ENCODE measurements at regions of chr9 and their contacts with region 1.

Region 1: DNA sequence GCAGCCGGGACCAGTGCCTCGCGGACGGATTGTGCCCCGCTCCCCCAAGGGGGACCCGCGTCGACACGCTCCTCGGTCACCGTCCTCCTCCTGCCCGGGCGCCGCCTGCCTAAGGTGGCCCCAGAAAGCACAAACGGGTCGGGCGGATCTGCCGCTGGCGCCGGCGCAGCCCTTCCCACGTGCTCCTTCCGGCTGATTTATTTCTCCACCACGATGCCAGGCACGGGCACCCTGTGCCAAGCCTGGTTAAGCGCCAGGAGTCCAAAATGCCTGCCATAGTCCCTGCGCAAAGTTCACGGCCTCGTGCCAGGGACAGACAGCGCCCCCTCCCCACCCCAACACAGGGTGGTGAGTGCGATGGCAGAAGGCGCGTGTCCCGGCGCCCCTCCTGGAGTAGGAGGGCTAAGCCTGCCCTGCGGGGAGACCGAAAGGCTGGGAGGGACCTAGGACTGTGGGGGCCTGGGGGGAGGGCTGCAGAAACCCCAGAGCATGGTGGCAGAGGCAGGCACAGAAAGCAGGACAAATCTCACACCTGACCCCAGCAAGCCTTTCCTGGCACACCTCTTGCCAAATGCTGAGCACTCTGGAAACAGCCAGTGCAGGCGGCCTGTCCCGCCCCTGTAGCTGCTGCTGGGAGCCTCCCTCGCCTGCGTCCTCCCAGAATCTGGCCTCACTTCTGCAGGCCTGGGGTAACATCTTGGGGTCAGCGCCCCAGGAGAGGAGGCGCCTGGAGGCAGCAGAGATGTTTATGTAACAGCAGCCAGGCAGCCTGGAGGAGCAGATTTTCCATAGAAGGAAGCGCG is 1.1 kb upstream of the NOTCH1 start:
- DNase-seq: peak; percentile 40 to 81 (median 53)
- ATAC-seq: peak; percentile 41
- H3K4me3 Mint-ChIP-seq: peak overlapping the region; percentile 72 to 90 (median 82)
- H3K27ac Mint-ChIP-seq: peak overlapping the region in 7 of 10 donors; percentile 15 to 83 (median 53)
- H3K4me1 Mint-ChIP-seq: peaks cover 6 to 45% (median 35%) of the 10 kb centered on the region in 4 donors
- H3K27me3 Mint-ChIP-seq: no peaks in the 10 kb centered on the region

Region 2: DNA sequence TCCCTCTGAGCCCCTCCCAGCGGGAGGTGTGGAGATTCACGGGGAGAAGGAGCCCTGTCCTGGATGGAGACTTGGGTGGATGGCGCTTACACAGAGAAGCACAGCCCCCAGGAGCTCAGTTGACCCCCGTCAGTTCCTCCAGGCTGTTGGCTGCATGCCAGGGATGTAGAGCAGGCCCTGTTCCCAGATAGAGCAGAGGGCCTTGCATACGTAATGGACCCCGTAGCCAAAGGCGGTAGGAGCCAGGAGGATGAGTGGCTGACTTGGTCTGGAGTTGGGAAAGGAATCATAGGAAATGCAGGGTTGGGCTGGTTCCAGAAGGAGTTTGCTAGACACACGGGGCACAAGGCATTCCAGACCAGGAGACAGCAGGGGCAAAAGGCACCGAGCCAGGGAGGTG is 133.9 kb before region 1 on chr9:
- POLR2A ChIA-PET with region 1: no interaction called
- DNase-seq: no peak
- ATAC-seq: no peak
- H3K4me3 Mint-ChIP-seq: peak overlapping the region in 2 of 10 donors; percentile 4 to 20
- H3K27ac Mint-ChIP-seq: peak overlapping the region in 1 of 10 donors; percentile 51
- H3K4me1 Mint-ChIP-seq: peaks cover 15 to 44% (median 32%) of the 10 kb centered on the region in 4 donors
- H3K27me3 Mint-ChIP-seq: no peaks in the 10 kb centered on the region

Region 3: GRCh38 chr9:136438909-136439549 is 107.9 kb before region 1 on chr9:
- POLR2A ChIA-PET with region 1: no interaction called
- DNase-seq: peak; percentile 14 to 70 (median 50)
- ATAC-seq: peak; percentile 71 to 78
- H3K4me3 Mint-ChIP-seq: peak overlapping the region; percentile 74 to 92 (median 82)
- H3K27ac Mint-ChIP-seq: peak overlapping the region in 3 of 10 donors; percentile 18 to 84 (median 72)
- H3K4me1 Mint-ChIP-seq: peaks cover 13 to 31% (median 26%) of the 10 kb centered on the region in 4 donors
- H3K27me3 Mint-ChIP-seq: no peaks in the 10 kb centered on the region

Region 4: GRCh38 chr9:136533775-136534157 is 13.1 kb before region 1 on chr9:
- POLR2A ChIA-PET with region 1: interaction called, 30 read pairs
- DNase-seq: peak in 9 of 10 donors; percentile 21 to 66 (median 43)
- ATAC-seq: peak; percentile 38 to 60
- H3K4me3 Mint-ChIP-seq: peak overlapping the region; percentile 60 to 81 (median 77)
- H3K27ac Mint-ChIP-seq: peak overlapping the region; percentile 52 to 96 (median 90)
- H3K4me1 Mint-ChIP-seq: peaks cover 19 to 73% (median 58%) of the 10 kb centered on the region in 4 donors
- H3K27me3 Mint-ChIP-seq: no peaks in the 10 kb centered on the region